BJ (cell line): ENCODE measurements at regions of chr12 and their contacts with region 1.

Region 1: GRCh38 chr12:52506858-52507715 is 13.1 kb downstream of the KRT5 start:
- DNase-seq: no peak
- H3K4me3 ChIP-seq: no peak overlapping the region
- H3K27me3 ChIP-seq: peaks cover 8% of the 10 kb centered on the region
- CTCF ChIP-seq: peak; percentile 71

Region 2: GRCh38 chr12:51326762-51327439 is 1180.2 kb before region 1 on chr12:
- CTCF ChIA-PET with region 1: no interaction called
- POLR2A ChIA-PET with region 1: no interaction called
- DNase-seq: peak; percentile 26
- H3K4me3 ChIP-seq: no peak overlapping the region
- H3K27me3 ChIP-seq: no peaks in the 10 kb centered on the region
- CTCF ChIP-seq: no peak

Region 3: GRCh38 chr12:51788876-51789275 is 718.2 kb before region 1 on chr12:
- CTCF ChIA-PET with region 1: no interaction called
- POLR2A ChIA-PET with region 1: no interaction called
- DNase-seq: peak; percentile 44
- H3K4me3 ChIP-seq: no peak overlapping the region
- H3K27me3 ChIP-seq: no peaks in the 10 kb centered on the region
- CTCF ChIP-seq: no peak

Region 4: DNA sequence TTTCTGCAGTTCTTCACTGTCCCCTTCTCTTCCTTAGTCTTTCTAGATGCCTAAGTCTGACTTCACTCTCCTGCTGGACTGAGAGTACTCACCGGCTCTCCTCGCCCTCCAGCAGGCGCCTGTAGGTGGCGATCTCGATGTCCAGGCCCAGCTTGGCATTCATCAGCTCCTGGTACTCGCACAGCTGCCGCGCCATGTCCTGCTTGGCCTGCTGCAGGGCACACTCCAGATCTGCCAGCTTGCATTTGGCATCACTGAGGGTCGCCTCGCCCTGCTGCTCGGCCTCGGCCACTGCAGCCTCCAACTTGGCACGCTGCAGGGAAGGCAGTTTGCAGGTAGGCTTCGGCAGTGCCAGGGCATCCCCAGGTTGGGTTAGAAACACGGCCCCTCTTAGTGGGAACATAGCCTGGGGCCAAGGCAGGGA is 126.8 kb before region 1 on chr12:
- CTCF ChIA-PET with region 1: interaction called, 18 read pairs
- POLR2A ChIA-PET with region 1: no interaction called
- DNase-seq: no peak
- H3K4me3 ChIP-seq: no peak overlapping the region
- H3K27me3 ChIP-seq: peaks cover 9% of the 10 kb centered on the region
- CTCF ChIP-seq: peak; percentile 64

Region 5: DNA sequence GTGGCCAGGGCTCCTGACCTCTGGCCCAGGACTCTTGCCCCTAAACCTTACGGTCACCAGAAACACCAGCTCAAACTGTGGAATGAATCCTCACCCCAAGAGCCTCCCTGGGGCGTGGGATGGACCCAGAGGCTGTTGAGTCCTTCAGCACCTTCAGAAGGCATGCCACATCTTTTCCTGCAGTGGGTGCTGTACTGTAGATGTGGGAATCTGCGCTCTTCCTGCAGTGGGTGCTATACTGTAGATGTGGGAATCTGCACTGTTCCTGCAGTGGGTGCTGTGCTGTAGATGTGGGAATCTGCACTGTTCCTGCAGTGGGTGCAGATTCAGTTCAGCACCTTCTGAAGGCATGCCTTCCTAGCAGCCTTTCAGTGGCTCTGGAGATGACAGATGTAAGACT is 102.1 kb before region 1 on chr12:
- CTCF ChIA-PET with region 1: no interaction called
- POLR2A ChIA-PET with region 1: no interaction called
- DNase-seq: no peak
- H3K4me3 ChIP-seq: no peak overlapping the region
- H3K27me3 ChIP-seq: peaks cover 8% of the 10 kb centered on the region
- CTCF ChIP-seq: no peak

Region 6: DNA sequence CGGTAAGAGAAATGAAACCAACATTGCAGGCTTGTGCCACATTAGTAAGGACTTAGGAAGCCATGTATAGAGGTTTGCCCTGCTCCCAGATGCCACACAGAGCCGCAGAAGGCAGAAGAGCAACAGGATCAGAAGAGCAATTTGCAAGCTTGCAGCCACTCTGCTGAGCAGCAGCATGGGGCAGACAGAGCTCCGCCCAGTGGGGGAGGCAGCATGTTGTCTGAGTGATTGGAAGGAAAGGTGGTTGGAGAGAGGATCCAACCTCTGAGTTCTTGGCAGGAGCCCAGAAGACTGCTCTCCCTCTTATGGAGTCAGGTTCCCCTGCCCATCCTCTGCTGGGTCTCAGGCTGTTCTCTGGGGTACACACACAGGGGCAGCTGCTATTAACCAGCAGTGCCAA is 11.7 kb before region 1 on chr12:
- CTCF ChIA-PET with region 1: interaction called, 17 read pairs
- POLR2A ChIA-PET with region 1: interaction called, 4 read pairs
- DNase-seq: no peak
- H3K4me3 ChIP-seq: no peak overlapping the region
- H3K27me3 ChIP-seq: peaks cover 5% of the 10 kb centered on the region
- CTCF ChIP-seq: no peak

Region 7: DNA sequence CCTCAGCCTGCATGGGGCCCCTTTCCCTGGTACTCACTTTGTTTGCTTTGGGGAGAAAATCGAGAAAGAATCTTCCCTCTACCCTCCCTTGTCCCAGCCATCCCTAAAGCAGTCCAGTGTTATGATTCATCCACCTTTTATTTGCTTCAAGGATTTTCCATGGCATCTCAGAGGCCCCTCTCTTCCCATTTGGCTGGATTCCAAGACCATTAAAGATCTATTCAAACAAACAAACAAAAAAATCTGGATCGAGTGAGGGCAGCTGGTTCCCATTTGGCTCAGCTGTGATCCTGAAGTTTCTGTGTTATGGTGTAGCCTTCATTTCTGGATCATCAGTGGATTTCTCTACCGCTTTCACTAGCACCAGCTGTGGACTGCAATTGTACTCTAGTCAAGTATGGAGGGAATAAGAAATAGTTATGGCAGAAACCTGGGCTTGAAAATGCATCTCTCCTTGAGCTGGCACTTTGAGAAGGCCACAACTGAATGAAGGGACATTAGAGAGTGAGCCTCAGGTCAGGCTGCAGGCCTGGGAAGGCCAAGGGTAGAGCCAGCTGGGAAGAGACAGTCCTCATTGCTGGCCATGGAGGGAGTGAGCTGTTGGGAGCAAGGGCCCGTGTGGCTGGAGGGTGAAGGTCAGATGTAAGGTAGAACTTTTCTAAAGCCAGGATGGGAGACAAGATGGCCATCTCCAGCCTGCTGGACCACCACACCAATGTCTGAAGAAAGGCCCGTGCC is 32.2 kb after region 1 on chr12:
- CTCF ChIA-PET with region 1: no interaction called
- POLR2A ChIA-PET with region 1: no interaction called
- DNase-seq: peak; percentile 77
- H3K4me3 ChIP-seq: no peak overlapping the region
- H3K27me3 ChIP-seq: peaks cover 5% of the 10 kb centered on the region
- CTCF ChIP-seq: no peak